Caco-2 (cell line): ENCODE measurements at regions of chr18 and their contacts with region 1.

Region 1: DNA sequence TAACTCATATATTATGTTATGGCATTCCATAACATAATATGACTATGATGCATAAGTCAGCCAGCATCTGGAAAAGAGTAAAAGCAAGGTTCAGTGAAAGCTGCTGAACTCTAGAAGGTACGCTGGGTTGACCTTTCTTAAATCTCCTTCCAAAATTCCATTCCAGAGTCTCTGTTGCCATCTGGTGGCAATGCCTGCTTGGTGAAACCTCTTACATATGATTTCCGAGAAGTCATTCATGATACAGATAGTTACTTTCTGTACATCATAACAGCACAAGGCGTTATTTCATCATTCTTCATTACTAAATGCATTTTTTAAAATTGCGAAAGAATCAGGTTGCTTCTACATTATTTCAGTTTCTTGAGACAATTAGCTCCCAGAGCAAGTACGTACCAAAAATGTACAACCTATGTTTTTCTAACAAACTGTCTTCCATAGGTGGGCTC is 7.0 kb upstream of the EPG5 start:
- DNase-seq: peak; percentile 44 to 57
- H3K4me3 ChIP-seq: no peak overlapping the region
- H3K4me3 Mint-ChIP-seq: no peak overlapping the region
- H3K27ac Mint-ChIP-seq: no peak overlapping the region
- H3K4me1 ChIP-seq: no peaks in the 10 kb centered on the region
- H3K4me1 Mint-ChIP-seq: no peaks in the 10 kb centered on the region
- H3K27me3 ChIP-seq: no peaks in the 10 kb centered on the region
- H3K27me3 Mint-ChIP-seq: no peaks in the 10 kb centered on the region
- CTCF ChIP-seq: peak; percentile 48 to 56

Region 2: GRCh38 chr18:45664824-45665763 is 309.0 kb before region 1 on chr18:
- CTCF ChIA-PET with region 1: no interaction called
- POLR2A ChIA-PET with region 1: no interaction called
- intact Hi-C with region 1: loop called (anchors 10 kb)
- DNase-seq: peak in 1 of 2 experiments; percentile 49
- H3K4me3 ChIP-seq: no peak overlapping the region
- H3K4me3 Mint-ChIP-seq: no peak overlapping the region
- H3K27ac Mint-ChIP-seq: no peak overlapping the region
- H3K4me1 ChIP-seq: no peaks in the 10 kb centered on the region
- H3K4me1 Mint-ChIP-seq: peaks cover 6% of the 10 kb centered on the region
- H3K27me3 ChIP-seq: no peaks in the 10 kb centered on the region
- H3K27me3 Mint-ChIP-seq: no peaks in the 10 kb centered on the region
- CTCF ChIP-seq: peak; percentile 61 to 63

Region 3: GRCh38 chr18:45722899-45723298 is 251.2 kb before region 1 on chr18:
- CTCF ChIA-PET with region 1: no interaction called
- POLR2A ChIA-PET with region 1: no interaction called
- intact Hi-C with region 1: loop called (anchors 1 kb)
- DNase-seq: peak; percentile 67 to 80
- H3K4me3 ChIP-seq: no peak overlapping the region
- H3K4me3 Mint-ChIP-seq: no peak overlapping the region
- H3K27ac Mint-ChIP-seq: no peak overlapping the region
- H3K4me1 ChIP-seq: no peaks in the 10 kb centered on the region
- H3K4me1 Mint-ChIP-seq: no peaks in the 10 kb centered on the region
- H3K27me3 ChIP-seq: no peaks in the 10 kb centered on the region
- H3K27me3 Mint-ChIP-seq: no peaks in the 10 kb centered on the region
- CTCF ChIP-seq: peak; percentile 48 to 76

Region 4: DNA sequence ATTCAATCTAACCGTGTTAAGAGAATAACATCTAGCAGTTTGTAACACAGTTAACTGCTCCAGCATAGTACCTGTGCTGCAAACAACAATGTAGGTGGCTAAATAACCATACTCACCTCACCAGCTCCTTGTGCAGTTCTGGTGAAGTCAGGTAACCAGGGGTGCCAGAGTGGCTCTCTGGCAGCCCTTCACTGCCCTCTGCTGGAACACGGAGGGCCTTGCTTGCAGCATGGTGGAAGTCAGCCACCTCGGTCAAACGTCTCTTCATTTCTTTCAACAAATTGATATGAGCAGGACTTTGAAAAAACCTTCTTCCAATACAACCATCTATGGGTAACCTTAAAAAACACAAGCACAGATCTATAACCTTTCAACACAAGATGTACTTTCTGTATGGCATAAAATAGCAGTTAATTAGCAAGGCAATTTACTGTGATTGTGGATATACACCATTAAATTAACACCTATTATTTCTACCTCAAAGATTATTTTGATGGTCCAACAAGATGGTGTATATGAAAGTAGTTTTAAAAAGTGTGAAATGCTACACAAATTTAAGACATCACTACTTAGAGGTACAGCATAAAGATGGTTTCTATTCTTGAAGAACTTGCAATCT is 63.6 kb before region 1 on chr18:
- CTCF ChIA-PET with region 1: no interaction called
- POLR2A ChIA-PET with region 1: no interaction called
- intact Hi-C with region 1: loop called (anchors 2 kb)
- DNase-seq: peak; percentile 36 to 51
- H3K4me3 ChIP-seq: no peak overlapping the region
- H3K4me3 Mint-ChIP-seq: no peak overlapping the region
- H3K27ac Mint-ChIP-seq: no peak overlapping the region
- H3K4me1 ChIP-seq: no peaks in the 10 kb centered on the region
- H3K4me1 Mint-ChIP-seq: no peaks in the 10 kb centered on the region
- H3K27me3 ChIP-seq: no peaks in the 10 kb centered on the region
- H3K27me3 Mint-ChIP-seq: no peaks in the 10 kb centered on the region
- CTCF ChIP-seq: peak; percentile 25 to 46

Region 5: DNA sequence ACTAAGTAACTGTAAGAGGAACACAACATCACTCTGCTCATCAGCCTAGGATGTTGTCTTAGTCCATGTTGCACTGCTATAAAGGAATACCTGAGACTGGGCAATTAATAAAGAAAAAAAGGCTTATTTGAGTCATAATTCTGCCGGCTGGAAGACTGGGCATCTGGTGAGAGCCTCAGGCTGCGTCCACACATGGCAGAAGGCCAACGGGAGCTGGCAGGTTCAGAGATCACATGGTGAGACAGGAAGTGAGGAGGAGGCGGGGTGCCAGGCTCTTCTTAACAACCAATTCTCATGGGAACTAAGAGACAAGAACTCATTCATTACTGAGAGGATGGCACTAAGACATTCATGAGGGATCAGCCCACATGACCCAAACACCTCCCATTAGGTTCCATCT is 53.7 kb before region 1 on chr18:
- CTCF ChIA-PET with region 1: no interaction called
- POLR2A ChIA-PET with region 1: no interaction called
- intact Hi-C with region 1: loop called (anchors 2 kb)
- DNase-seq: no peak
- H3K4me3 ChIP-seq: no peak overlapping the region
- H3K4me3 Mint-ChIP-seq: no peak overlapping the region
- H3K27ac Mint-ChIP-seq: no peak overlapping the region
- H3K4me1 ChIP-seq: no peaks in the 10 kb centered on the region
- H3K4me1 Mint-ChIP-seq: no peaks in the 10 kb centered on the region
- H3K27me3 ChIP-seq: no peaks in the 10 kb centered on the region
- H3K27me3 Mint-ChIP-seq: no peaks in the 10 kb centered on the region
- CTCF ChIP-seq: no peak